ENCODE measurements at regions of chr5 and their contacts with region 1.

Region 1: DNA sequence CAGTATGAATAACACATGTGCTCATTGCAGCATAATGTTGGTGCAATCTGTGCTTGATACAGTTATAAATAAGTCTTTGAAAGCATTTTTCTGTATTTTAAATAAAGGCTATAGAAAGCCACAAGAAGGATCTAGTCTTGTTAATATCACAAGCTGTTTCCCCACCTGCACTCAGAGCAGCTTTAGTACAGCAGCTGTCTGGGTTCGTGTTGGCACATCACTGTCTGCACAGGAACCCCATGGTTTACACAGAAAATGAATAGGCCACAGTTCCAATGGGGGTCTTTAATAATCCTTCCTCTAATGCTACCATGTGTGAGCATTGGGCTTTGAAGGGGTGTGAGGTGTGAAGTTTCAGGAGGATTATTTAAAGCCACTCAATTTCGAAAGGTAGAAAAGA is 2269.7 kb downstream of the MAT2B start:
- DNase-seq: no peak
- ATAC-seq: no peak
- H3K4me3 ChIP-seq: no peak overlapping the region
- H3K27ac ChIP-seq: no peak overlapping the region
- H3K4me1 ChIP-seq: no peaks in the 10 kb centered on the region
- H3K27me3 ChIP-seq: no peaks in the 10 kb centered on the region
- CTCF ChIP-seq: no peak
- EP300 ChIP-seq: no peak
- POLR2A ChIP-seq: no peak
- RAD21 ChIP-seq: no peak

Region 2: DNA sequence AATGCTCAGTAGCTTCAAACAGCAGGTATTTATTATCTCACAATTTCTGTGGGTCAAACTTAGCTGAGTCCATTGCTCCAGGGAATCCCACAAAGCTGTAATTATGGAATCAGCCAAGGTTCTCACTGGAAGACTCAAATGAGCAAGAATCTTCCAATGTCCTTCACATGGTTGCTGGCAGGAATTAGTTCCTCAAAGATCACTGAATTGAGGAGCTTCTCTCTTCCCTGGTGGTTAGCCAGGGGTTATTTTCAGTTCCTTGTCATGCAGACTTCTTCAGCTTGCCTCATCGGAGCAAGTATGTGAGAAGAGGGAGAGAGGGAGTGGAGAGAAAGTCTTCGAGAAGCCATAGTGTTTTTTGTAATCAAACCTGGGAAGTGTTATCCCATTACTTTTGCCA is 62.2 kb after region 1 on chr5:
- CTCF ChIA-PET with region 1: no interaction called
- POLR2A ChIA-PET with region 1: no interaction called
- in situ Hi-C with region 1: no loop called
- intact Hi-C with region 1: loop called (anchors 2 kb)
- DNase-seq: no peak
- ATAC-seq: no peak
- H3K4me3 ChIP-seq: no peak overlapping the region
- H3K27ac ChIP-seq: no peak overlapping the region
- H3K4me1 ChIP-seq: no peaks in the 10 kb centered on the region
- H3K27me3 ChIP-seq: no peaks in the 10 kb centered on the region
- CTCF ChIP-seq: no peak
- EP300 ChIP-seq: no peak
- POLR2A ChIP-seq: no peak
- RAD21 ChIP-seq: no peak